Mammary epithelial cell (primary cell): ENCODE measurements at regions of chr3 and their contacts with region 1.

Region 1: GRCh38 chr3:197906023-197906849 is 43.8 kb upstream of the RPL35A start:
- DNase-seq: peak; percentile 90
- H3K4me3 ChIP-seq: no peak overlapping the region
- H3K27ac ChIP-seq: peak overlapping the region; percentile 38
- H3K4me1 ChIP-seq: peaks cover 19% of the 10 kb centered on the region
- H3K27me3 ChIP-seq: no peaks in the 10 kb centered on the region
- CTCF ChIP-seq: peak; percentile 92 to 97

Region 2: GRCh38 chr3:197926418-197926817 is 20.2 kb after region 1 on chr3:
- CTCF ChIA-PET with region 1: no interaction called
- dilution Hi-C with region 1: no loop called
- in situ Hi-C with region 1: no loop called
- intact Hi-C with region 1: no loop called
- DNase-seq: no peak
- H3K4me3 ChIP-seq: no peak overlapping the region
- H3K27ac ChIP-seq: no peak overlapping the region
- H3K4me1 ChIP-seq: no peaks in the 10 kb centered on the region
- H3K27me3 ChIP-seq: no peaks in the 10 kb centered on the region
- CTCF ChIP-seq: peak in 1 of 2 donors; percentile 2

Region 3: DNA sequence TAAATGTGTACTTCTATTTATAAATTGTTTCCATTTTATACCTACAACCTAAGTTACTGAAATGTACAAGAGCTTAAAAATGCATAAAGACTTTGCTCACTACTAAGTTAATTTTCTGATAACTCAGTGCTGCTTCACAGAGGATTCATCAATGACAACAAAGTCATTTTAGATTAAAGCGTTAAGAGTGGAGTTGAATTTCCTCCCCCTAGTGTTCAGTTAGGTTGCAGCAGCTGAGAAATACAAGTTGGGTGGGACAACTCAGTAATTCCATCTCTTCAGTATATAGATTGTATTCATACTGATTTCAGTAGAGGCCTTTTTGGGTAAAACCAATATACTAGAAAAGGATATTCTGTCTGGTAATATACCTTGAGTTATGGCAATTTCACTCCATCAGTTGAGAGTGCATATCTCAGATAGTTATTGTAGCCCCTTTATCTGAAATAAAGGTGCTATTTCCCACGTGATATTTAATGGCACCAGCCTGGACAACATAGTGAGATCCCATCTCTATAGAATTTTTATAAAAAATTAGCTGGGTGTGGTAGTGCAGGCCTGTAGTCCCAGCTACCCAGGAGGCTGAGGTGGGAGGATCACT is 36.8 kb after region 1 on chr3:
- CTCF ChIA-PET with region 1: interaction called, 4 read pairs
- dilution Hi-C with region 1: loop called (anchors 5 kb)
- in situ Hi-C with region 1: no loop called
- intact Hi-C with region 1: loop called (anchors 1 kb)
- DNase-seq: peak; percentile 35
- H3K4me3 ChIP-seq: no peak overlapping the region
- H3K27ac ChIP-seq: no peak overlapping the region
- H3K4me1 ChIP-seq: no peaks in the 10 kb centered on the region
- H3K27me3 ChIP-seq: no peaks in the 10 kb centered on the region
- CTCF ChIP-seq: peak; percentile 81 to 86

Region 4: GRCh38 chr3:198080521-198081280 is 174.5 kb after region 1 on chr3:
- CTCF ChIA-PET with region 1: no interaction called
- dilution Hi-C with region 1: no loop called
- in situ Hi-C with region 1: no loop called
- intact Hi-C with region 1: loop called (anchors 2 kb)
- DNase-seq: peak; percentile 70
- H3K4me3 ChIP-seq: peak overlapping the region; percentile 20 to 49 (median 39)
- H3K27ac ChIP-seq: no peak overlapping the region
- H3K4me1 ChIP-seq: peaks cover 17% of the 10 kb centered on the region
- H3K27me3 ChIP-seq: peaks cover 12% of the 10 kb centered on the region
- CTCF ChIP-seq: peak; percentile 34 to 59

Region 5: DNA sequence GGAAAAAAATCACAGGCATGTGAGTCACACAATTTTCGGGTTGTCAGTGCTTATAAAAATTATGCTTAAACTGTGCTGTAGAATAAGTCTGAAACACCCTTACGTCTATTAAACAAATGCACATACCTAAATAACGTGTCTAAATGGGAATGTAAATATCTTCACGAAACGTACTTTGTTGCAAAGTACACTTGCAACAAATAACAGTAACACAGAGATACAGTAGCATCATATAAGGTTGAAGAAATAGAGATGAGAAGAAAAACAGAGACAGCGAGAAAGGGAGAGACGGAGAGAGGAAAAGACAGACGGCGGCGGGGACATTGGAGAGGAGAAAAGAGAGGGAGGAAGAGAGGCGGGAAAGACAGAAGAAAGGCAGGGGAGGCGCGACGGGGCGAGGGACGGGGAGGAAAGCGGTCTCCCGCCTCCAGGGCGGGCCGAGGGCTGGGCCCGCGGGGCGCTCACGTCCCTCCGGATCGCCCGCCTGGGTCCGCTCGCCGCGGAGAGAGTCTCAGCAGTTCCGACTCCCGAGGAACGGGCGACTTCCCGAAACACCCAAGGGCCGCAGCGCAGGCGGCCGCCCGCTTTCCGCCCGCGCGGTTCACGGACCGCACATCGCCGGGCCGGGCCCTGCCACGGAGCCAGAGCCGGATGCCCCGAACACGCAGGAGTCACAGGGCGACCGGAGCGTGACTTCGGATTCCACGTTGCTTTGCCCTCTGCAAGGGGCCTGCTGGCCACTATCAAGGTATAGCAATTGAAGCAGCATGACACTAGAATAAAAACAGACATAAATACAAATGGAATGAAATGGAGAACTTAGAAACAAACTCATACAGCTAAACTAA is 207.2 kb after region 1 on chr3:
- CTCF ChIA-PET with region 1: no interaction called
- dilution Hi-C with region 1: no loop called
- in situ Hi-C with region 1: no loop called
- intact Hi-C with region 1: no loop called
- DNase-seq: no peak
- H3K4me3 ChIP-seq: no peak overlapping the region
- H3K27ac ChIP-seq: no peak overlapping the region
- H3K4me1 ChIP-seq: no peaks in the 10 kb centered on the region
- H3K27me3 ChIP-seq: peaks cover 14% of the 10 kb centered on the region
- CTCF ChIP-seq: no peak